ENCODE measurements at regions of chr3 and their contacts with region 1.

Region 1: DNA sequence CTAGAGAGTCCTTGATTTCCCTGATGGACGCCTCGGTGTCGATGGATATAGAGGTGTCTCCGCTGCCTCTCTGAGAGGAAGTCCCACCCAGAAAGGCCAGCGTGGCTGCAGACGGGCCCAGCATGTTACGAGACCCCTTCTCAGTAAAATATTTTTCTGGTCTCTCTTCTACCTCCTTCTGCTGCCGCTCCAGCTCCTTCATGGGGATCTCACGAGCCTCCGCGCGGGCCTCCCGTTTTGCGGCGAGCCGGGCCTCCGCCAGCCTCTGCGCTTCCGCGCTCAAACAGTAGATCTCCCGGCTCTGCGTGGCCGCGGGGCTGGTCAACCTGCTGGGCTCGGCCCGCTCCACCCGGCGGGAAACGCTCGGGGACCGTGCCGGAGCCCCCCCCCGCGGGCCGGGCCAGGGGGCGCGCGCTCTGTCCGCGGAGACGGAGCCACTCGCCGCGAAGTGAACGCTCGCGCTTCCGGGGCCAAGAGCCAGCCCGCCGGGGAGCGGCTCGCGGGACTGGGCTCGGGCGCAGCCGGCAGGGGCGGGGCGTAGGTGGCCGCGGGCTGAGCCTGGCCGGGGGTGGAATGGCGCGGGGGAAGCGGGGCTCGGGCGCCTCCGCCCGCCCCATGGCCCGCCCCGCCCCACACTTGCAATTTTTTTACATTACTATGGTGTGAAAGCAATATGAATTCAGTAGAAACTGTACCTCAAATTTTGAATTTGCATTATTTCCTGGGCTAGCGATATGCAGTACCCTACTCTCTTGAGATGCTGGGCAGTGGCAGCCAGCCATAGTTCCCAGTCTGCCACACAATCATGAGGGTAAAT is 10.2 kb upstream of the KCNMB3 start:
- DNase-seq: peak; percentile 74
- H3K4me3 Mint-ChIP-seq: peak overlapping the region; percentile 75
- H3K27ac Mint-ChIP-seq: no peak overlapping the region
- H3K4me1 Mint-ChIP-seq: peaks cover 24% of the 10 kb centered on the region
- H3K27me3 Mint-ChIP-seq: peaks cover 14% of the 10 kb centered on the region

Region 2: GRCh38 chr3:179147873-179148615 is 113.1 kb before region 1 on chr3 and contains the start of gene PIK3CA:
- CTCF ChIA-PET with region 1: no interaction called
- POLR2A ChIA-PET with region 1: interaction called, 12 read pairs
- DNase-seq: peak; percentile 96
- H3K4me3 Mint-ChIP-seq: peak within 1 kb of the TSS; percentile 95
- H3K27ac Mint-ChIP-seq: peak within 1 kb of the TSS; percentile 92
- H3K4me1 Mint-ChIP-seq: peaks cover 32% of the 10 kb centered on the region
- H3K27me3 Mint-ChIP-seq: peaks cover 22% of the 10 kb centered on the region
- total RNA-seq, gene PIK3CA: 25.9 to 26.2 TPM

Region 3: GRCh38 chr3:179236669-179237301 is 24.4 kb before region 1 on chr3:
- CTCF ChIA-PET with region 1: no interaction called
- POLR2A ChIA-PET with region 1: no interaction called
- DNase-seq: no peak
- H3K4me3 Mint-ChIP-seq: no peak overlapping the region
- H3K27ac Mint-ChIP-seq: no peak overlapping the region
- H3K4me1 Mint-ChIP-seq: peaks cover 4% of the 10 kb centered on the region
- H3K27me3 Mint-ChIP-seq: no peaks in the 10 kb centered on the region

Region 4: DNA sequence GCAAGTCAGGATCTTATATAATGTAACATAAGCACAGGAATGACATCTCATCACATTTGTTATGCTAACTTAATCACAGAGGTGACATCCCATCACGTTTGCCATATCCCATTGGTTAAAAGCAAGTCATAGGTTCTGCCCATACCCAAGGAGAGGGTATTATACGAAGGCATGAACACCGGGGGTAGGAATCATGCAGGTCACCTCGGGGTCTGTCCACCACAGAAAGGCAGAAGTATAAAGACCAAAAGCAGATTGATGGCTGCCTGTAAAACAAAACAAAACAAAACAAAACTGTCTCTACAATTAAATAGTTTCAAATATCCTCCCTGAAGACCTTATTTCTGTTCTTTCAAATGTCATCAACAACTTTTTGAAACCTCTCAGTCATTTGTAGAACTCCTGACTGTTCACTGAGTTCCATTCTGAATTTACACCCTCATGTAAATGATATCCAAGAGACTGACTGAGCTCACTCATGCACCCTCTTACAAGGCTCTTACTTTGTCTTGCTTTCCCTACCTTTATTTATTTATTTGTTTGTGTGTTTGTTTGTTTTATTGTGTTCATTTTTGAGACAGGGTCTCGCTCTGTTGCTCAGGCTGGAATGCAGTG is 38.9 kb after region 1 on chr3:
- CTCF ChIA-PET with region 1: no interaction called
- POLR2A ChIA-PET with region 1: no interaction called
- DNase-seq: no peak
- H3K4me3 Mint-ChIP-seq: no peak overlapping the region
- H3K27ac Mint-ChIP-seq: no peak overlapping the region
- H3K4me1 Mint-ChIP-seq: peaks cover 2% of the 10 kb centered on the region
- H3K27me3 Mint-ChIP-seq: peaks cover 14% of the 10 kb centered on the region

Measured in activated CD4-positive, alpha-beta memory T cell treated with anti-CD3 and anti-CD28 coated beads, Interleukin-2, amount 10 ng/mL, durations not matched to agents 7 days and 5 days (primary cell).